ENCODE measurements at regions of chr17 and their contacts with region 1.

Region 1: GRCh38 chr17:979538-980405 is at the start of gene NXN:
- DNase-seq: peak; percentile 71
- H3K4me3 ChIP-seq: peak within 1 kb of the TSS; percentile 69 to 93 (median 90)
- H3K27ac ChIP-seq: peak within 1 kb of the TSS; percentile 79
- H3K4me1 ChIP-seq: peaks cover 25% of the 10 kb centered on the region
- H3K27me3 ChIP-seq: no peaks in the 10 kb centered on the region
- CTCF ChIP-seq: peak in 1 of 2 donors; percentile 43
- total RNA-seq, gene NXN: 126 to 128 TPM

Region 2: DNA sequence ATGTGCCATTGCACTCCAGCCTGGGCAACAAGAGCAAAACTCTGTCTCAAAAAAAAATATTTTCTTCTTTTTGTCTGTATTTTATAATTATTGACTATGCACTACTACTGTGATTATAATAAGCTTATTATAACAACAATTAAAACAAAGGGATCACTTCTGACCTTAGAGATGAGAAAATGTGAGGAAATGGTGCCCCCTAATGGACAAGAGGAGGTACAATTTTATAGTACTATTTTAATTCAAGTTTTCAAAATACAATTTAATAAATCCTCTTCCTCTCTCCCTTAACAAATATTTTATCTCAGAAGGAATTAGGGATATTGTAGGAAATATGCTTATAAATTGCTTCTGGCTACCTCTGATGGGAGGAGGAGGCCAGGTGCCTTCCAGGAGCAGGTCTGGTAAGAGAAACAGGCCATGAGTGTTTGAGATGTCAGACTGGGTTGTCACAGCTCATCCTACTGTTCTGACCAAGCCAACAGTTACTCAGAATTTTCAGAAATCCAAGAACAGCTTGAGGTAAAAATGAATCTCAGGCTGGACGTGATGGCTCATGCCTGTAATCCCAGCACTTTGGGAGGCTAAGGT is 279.2 kb before region 1 on chr17:
- CTCF ChIA-PET with region 1: interaction called, 7 read pairs
- dilution Hi-C with region 1: no loop called
- in situ Hi-C with region 1: no loop called
- intact Hi-C with region 1: loop called (anchors 2 kb)
- DNase-seq: no peak
- H3K4me3 ChIP-seq: no peak overlapping the region
- H3K27ac ChIP-seq: no peak overlapping the region
- H3K4me1 ChIP-seq: no peaks in the 10 kb centered on the region
- H3K27me3 ChIP-seq: no peaks in the 10 kb centered on the region
- CTCF ChIP-seq: peak; percentile 46 to 56

Region 3: GRCh38 chr17:781805-782731 is 197.7 kb before region 1 on chr17 and contains the starts of genes GLOD4 and MRM3:
- CTCF ChIA-PET with region 1: no interaction called
- dilution Hi-C with region 1: no loop called
- in situ Hi-C with region 1: loop called in 1 of 2 experiments (anchors 5 kb)
- intact Hi-C with region 1: loop called (anchors 2 kb)
- DNase-seq: peak; percentile 82
- H3K4me3 ChIP-seq: peak within 1 kb of the TSS; percentile 73 to 97 (median 86)
- H3K27ac ChIP-seq: peak within 1 kb of the TSS; percentile 87
- H3K4me1 ChIP-seq: peaks cover 15% of the 10 kb centered on the region
- H3K27me3 ChIP-seq: no peaks in the 10 kb centered on the region
- CTCF ChIP-seq: peak in 1 of 2 donors; percentile 28
- total RNA-seq, gene GLOD4: 33.3 to 62.7 TPM
- total RNA-seq, gene MRM3: 14.6 to 15.3 TPM

Region 4: GRCh38 chr17:869567-870525 is 109.9 kb before region 1 on chr17:
- CTCF ChIA-PET with region 1: interaction called, 24 read pairs
- dilution Hi-C with region 1: no loop called
- in situ Hi-C with region 1: loop called in 1 of 2 experiments (anchors 10 kb)
- intact Hi-C with region 1: no loop called
- DNase-seq: peak; percentile 96
- H3K4me3 ChIP-seq: peak overlapping the region; percentile 14 to 36 (median 30)
- H3K27ac ChIP-seq: peak overlapping the region; percentile 89
- H3K4me1 ChIP-seq: peaks cover 17% of the 10 kb centered on the region
- H3K27me3 ChIP-seq: no peaks in the 10 kb centered on the region
- CTCF ChIP-seq: peak in 1 of 2 donors; percentile 8

Region 5: DNA sequence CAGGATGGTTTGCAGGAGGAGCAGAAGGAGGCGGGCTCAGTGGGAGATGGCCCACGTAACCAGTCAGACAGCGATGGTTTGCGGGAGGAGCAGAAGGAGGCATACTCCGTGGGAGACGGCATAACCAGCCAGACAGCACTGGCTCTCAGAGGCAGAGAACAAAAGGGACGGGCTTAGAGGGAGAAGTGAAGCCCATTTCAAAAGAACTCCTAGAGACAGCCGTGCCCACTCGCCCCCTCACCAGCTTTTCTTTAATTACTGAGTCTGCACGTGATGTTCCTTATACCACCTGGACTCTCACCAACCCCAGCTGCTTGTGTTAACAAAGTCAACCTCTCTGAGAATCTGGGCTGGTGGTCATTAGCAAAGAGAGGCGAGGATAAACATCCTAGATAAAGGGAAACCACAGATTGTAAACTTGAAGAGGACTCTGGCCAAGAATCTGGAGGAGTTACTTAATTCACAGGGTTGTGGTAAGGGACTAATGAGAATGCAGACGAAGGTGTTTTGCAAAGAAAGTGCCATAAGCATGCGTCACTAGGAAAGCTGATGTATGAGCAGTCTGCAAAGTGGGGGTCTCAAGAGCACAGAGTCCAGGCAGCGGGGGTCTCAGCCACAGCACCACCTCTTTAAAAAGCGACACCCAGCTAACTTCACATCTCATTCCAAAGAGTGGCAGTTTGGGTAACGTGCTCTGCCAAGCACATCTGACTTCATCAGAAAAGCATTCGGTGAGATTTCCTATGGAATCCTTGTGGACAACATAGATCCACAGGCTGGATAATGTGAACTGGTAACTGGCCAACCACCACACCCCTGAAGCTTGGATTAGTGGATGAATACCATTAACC is 51.9 kb before region 1 on chr17:
- CTCF ChIA-PET with region 1: interaction called, 4 read pairs
- dilution Hi-C with region 1: no loop called
- in situ Hi-C with region 1: no loop called
- intact Hi-C with region 1: loop called (anchors 1 kb)
- DNase-seq: peak; percentile 87
- H3K4me3 ChIP-seq: peak overlapping the region in 1 of 3 experiments; percentile 1
- H3K27ac ChIP-seq: peak overlapping the region; percentile 95
- H3K4me1 ChIP-seq: peaks cover 66% of the 10 kb centered on the region
- H3K27me3 ChIP-seq: no peaks in the 10 kb centered on the region
- CTCF ChIP-seq: no peak

Region 6: DNA sequence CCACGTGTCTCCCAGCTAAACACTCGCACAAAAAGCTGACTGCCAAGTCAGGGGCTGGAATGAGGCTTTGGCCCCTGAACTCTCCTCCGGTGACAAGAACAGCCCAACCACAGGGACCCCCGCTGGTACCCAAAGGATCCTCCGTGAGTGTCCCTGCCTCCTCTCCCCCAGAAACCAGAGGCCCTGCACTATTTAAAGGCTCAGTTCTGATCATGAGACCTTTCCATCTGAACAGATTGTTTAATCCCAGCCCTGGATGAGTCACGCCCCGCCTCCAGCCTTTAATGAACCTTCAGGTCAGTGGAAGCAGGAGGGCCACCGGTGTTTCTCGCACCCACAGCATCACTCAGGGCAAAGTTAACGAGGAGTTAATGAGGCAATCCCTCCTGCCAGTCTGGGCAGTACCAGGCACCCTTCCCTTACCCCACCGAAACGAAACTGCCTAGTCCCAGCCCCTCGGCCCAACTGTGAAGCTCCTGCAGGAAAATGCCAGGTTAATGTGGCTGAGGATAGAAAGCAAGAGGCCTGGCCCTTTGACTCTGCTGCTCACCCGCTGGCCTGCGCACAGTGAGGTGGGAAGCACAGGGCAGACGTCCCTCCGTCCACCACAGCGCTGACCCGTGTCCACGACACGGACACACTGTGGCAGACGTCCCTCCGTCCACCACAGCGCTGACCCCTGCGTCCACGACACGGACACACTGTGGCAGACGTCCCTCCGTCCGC is 49.6 kb after region 1 on chr17:
- CTCF ChIA-PET with region 1: no interaction called
- dilution Hi-C with region 1: no loop called
- in situ Hi-C with region 1: no loop called
- intact Hi-C with region 1: no loop called
- DNase-seq: peak; percentile 20
- H3K4me3 ChIP-seq: no peak overlapping the region
- H3K27ac ChIP-seq: no peak overlapping the region
- H3K4me1 ChIP-seq: no peaks in the 10 kb centered on the region
- H3K27me3 ChIP-seq: no peaks in the 10 kb centered on the region
- CTCF ChIP-seq: no peak

Region 7: DNA sequence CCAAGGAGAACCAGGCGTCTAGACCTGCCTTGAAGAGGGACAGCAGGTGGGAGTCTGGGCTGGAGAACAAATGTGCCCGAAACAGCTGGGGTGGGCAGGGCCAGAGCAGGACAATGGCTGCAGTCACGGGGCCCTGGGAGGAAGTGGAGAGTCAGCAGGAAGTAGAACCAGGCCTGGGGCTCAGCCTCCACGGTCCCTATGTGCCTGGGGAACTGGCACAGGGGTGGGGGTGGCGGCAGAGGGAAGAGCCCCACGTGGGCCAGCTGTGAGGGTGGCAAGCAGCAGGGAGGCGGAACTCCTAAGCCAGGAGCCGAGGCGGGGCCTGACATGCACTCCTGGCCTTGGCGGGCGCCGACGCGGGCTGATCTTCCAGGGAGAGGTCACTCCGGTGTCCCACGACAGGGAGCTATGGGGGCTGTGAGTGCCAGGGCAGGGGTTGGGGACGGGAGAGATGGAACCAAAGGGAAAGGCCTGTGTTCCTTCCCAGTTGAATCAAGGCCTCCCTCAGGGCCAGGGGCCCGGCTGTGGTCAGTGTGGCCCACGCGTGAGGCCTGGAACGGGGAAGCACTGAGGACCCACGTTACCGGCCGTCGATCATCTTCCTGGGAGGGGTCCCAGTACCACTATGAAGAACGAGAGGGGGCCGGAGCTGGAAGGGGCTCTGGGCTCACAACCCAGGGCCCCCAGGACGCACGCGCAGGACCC is 59.9 kb after region 1 on chr17:
- CTCF ChIA-PET with region 1: no interaction called
- dilution Hi-C with region 1: loop called (anchors 10 kb)
- in situ Hi-C with region 1: no loop called
- intact Hi-C with region 1: no loop called
- DNase-seq: no peak
- H3K4me3 ChIP-seq: no peak overlapping the region
- H3K27ac ChIP-seq: no peak overlapping the region
- H3K4me1 ChIP-seq: peaks cover 14% of the 10 kb centered on the region
- H3K27me3 ChIP-seq: no peaks in the 10 kb centered on the region
- CTCF ChIP-seq: no peak